ENCODE measurements at regions of chr15 and their contacts with region 1.

Region 1: GRCh38 chr15:78108299-78109084 is 16.1 kb downstream of the SH2D7 start:
- H3K4me3 Mint-ChIP-seq: no peak overlapping the region
- H3K27ac Mint-ChIP-seq: peak overlapping the region; percentile 35
- H3K4me1 Mint-ChIP-seq: peaks cover 42% of the 10 kb centered on the region
- H3K27me3 Mint-ChIP-seq: peaks cover 2% of the 10 kb centered on the region

Region 2: DNA sequence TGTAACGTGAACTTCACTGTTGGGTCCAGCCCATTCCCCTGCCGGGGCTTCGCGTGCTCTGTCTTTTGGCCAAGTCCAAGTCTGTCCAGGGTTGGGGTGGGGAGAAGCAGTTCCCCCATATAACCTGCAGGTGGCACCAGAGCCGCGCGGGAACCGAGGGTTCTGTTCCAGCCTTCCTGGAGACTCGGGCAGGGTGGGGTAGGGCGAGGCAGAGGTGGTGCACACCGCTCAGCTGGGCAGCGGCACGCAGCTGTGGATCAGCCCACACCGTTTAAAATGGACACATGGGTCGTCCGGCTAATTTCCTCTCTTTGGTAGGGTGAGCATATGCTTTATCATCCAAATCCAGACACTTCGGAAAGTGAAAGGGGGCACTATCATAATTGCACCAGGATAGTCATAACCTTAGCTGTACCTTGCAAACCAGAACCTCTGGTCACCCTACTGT is 149.0 kb before region 1 on chr15:
- intact Hi-C with region 1: loop called (anchors 2 kb)
- H3K4me3 Mint-ChIP-seq: peak overlapping the region; percentile 49
- H3K27ac Mint-ChIP-seq: no peak overlapping the region
- H3K4me1 Mint-ChIP-seq: peaks cover 19% of the 10 kb centered on the region
- H3K27me3 Mint-ChIP-seq: peaks cover 15% of the 10 kb centered on the region

Region 3: DNA sequence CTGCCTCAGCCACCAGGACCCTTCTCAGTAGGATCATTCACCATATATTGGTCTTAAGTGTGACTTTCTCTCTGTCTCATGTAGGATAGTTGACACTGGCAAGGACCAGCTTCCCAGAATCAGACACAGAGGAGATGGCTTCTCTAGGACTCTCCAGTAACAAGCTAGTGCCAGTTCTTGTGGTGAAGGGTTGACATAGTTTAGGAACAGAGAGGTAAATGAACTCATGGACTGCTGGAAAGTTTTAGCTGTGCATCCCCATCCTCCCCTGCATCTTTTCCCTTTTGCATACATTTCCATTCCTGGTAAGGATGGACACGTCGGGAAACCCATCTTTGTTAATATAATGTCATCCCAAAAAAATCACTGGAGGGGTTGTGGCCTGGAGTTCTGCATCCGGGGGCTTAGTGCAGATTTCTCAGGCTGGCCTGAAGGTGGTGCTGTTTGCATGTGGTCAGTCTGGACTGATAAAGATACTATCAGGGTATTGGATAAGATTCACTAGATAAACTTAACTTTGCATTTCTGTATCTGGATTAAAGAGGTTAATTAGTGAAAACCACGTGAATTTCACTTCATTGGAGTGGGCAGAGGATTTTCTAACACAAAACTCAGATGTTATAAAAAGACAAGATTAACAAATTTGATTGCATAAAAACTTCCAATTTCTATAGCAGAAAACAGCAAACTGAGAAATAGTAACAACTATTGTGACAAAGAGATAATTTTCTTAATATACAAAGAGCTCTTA is 141.8 kb before region 1 on chr15:
- intact Hi-C with region 1: loop called (anchors 1 kb)
- H3K4me3 Mint-ChIP-seq: no peak overlapping the region
- H3K27ac Mint-ChIP-seq: no peak overlapping the region
- H3K4me1 Mint-ChIP-seq: peaks cover 9% of the 10 kb centered on the region
- H3K27me3 Mint-ChIP-seq: peaks cover 4% of the 10 kb centered on the region

Region 4: DNA sequence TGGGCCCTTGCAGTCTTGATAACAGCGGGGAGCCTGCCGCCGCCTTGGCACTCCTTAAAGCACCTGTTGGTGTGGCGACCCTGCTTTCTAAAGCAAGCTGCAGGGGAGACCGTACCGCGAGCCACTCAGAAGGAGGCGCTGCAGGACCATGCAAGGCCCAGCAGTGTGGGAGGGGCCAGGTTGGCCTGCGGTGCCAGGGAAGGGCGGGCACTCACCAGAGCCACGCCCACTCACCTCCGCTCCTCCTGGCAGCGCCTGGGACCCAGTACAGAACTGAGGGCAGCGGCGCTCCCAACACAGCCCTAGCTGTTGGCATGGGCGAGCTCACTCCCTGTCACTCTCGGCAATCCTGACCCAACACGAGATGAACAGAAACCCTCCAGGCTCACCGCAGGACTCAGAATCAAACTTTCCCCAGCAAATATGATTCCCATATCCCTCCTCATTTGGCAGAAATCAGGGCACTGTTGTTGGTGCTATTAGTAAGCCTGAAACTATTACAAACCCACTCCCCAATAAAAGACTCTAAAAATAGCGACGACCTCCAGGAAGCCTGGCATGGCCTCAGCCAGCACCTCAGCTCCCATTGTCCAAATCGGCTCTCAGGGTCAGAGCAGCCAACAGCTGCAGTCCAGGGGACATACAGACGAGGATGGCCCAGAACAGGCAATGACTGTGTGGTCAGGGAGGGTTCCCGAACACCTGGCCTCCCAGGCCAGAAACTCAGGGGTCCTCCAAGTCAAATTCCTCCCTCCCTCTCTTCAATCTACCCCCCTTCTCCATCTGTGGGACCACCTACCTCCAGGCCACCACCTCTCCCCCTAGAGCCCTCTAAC is 108.2 kb before region 1 on chr15:
- intact Hi-C with region 1: loop called (anchors 5 kb)
- H3K4me3 Mint-ChIP-seq: no peak overlapping the region
- H3K27ac Mint-ChIP-seq: peak overlapping the region; percentile 54
- H3K4me1 Mint-ChIP-seq: peaks cover 16% of the 10 kb centered on the region
- H3K27me3 Mint-ChIP-seq: no peaks in the 10 kb centered on the region

Region 5: GRCh38 chr15:78195735-78196201 is 87.3 kb after region 1 on chr15:
- intact Hi-C with region 1: loop called (anchors 1 kb)
- H3K4me3 Mint-ChIP-seq: no peak overlapping the region
- H3K27ac Mint-ChIP-seq: no peak overlapping the region
- H3K4me1 Mint-ChIP-seq: peaks cover 1% of the 10 kb centered on the region
- H3K27me3 Mint-ChIP-seq: peaks cover 1% of the 10 kb centered on the region

Region 6: GRCh38 chr15:78241007-78241406 is 132.5 kb after region 1 on chr15:
- intact Hi-C with region 1: loop called (anchors 1 kb)
- H3K4me3 Mint-ChIP-seq: no peak overlapping the region
- H3K27ac Mint-ChIP-seq: no peak overlapping the region
- H3K4me1 Mint-ChIP-seq: peaks cover 5% of the 10 kb centered on the region
- H3K27me3 Mint-ChIP-seq: peaks cover 1% of the 10 kb centered on the region